Lower leg skin (tissue), 4 donors: ENCODE measurements at regions of chr5 and their contacts with region 1.

Region 1: GRCh38 chr5:158995694-158996173 is 104.0 kb downstream of the EBF1 start:
- DNase-seq: no peak
- H3K4me3 ChIP-seq: no peak overlapping the region
- CTCF ChIP-seq: no peak
- POLR2A ChIP-seq: no peak

Region 2: DNA sequence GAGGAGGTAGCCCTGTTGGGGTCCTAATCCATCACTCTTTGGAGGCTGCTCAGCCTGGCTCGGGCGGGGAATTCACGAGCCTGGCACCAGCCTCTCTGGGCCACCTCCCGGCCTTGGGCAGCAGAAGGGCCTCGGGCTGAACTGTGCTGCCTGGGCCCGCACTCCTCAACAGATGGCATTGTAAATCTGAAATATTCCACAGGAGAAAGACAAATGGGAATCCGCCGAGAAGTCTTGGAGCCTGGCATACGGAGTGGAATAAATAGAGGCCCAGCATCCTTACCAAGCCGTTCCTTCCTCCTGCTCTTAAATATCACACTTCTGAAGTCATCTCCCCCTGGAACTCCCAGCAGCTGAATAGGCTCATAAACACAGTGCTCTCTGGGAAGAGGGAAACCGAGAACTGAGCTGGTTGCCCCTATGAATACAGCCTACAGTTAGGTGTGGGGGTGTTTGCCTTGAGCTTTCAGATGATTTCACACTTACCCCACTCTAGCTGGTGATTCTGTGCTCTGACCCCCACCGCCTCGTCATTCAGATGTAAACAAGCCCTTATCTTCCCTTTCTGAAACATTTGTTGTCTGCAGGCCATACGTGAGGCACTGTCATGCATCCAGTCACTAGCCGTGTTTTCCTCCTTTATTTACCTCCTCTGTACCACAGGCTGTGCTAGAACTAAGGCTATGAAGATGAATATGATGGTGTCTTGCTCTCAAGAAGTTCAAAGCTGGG is 681.8 kb before region 1 on chr5:
- intact Hi-C with region 1: no loop called
- DNase-seq: no peak
- H3K4me3 ChIP-seq: no peak overlapping the region
- CTCF ChIP-seq: no peak
- POLR2A ChIP-seq: no peak

Region 3: DNA sequence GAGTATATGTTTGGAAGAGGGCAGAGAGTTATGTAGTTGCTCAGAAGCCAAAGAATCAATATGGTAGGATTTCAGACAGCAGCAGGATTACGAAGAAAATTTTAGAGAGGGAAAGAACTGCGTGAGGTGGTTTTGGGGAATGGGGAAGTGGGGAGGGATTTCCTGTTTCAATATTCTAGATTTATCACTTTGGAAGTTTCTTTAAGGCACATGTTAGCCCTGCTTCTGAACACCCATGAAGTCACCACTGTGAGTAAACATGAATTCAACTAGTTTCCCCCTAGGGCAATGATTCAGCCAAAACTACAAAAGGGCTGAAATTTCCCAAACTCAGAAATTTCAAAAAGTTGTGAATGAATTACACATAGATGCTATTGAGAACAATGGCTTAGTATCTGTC is 28.2 kb before region 1 on chr5:
- intact Hi-C with region 1: loop called (anchors 2 kb)
- DNase-seq: no peak
- H3K4me3 ChIP-seq: no peak overlapping the region
- CTCF ChIP-seq: no peak
- POLR2A ChIP-seq: no peak

Region 4: DNA sequence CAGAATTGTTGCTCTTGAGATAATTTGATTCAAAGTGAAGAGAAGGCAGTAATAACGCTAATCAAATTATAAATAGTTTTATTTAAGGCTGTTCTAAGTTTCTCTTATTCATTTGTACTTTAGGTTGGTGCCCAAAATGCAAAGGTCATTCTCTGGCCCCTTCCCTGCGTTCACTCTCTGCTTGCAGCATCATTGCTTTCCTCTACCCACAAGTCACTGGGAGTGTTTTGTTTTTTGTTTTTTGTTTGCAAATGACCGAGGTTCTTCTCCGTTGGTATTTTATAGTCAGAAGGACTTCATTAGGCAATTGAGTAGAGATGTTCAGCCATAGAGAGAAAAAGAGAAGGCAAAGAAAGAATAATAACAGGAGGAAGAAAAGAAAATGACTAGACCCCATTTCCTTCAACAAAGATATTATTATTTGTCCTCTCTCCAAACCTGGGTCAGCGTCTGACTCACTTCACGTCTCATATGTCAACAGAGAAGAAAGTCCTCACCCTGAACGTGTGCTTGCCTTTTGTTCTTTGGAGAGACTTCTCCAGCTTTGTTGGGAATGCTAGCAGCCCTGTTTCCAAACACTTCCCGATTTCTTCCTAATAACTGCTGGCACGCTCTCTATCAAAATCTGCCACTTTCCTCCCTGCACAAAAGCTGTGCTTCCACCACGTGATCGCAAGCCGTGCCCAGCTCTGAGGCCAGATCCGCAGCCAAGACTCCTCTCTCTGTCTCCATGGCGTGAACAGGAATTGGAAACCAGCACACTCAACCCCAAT is 15.8 kb before region 1 on chr5:
- intact Hi-C with region 1: no loop called
- DNase-seq: peak; percentile 64 to 93
- H3K4me3 ChIP-seq: no peak overlapping the region
- CTCF ChIP-seq: no peak
- POLR2A ChIP-seq: no peak